ENCODE measurements at regions of chr20 and their contacts with region 1.

Region 1: DNA sequence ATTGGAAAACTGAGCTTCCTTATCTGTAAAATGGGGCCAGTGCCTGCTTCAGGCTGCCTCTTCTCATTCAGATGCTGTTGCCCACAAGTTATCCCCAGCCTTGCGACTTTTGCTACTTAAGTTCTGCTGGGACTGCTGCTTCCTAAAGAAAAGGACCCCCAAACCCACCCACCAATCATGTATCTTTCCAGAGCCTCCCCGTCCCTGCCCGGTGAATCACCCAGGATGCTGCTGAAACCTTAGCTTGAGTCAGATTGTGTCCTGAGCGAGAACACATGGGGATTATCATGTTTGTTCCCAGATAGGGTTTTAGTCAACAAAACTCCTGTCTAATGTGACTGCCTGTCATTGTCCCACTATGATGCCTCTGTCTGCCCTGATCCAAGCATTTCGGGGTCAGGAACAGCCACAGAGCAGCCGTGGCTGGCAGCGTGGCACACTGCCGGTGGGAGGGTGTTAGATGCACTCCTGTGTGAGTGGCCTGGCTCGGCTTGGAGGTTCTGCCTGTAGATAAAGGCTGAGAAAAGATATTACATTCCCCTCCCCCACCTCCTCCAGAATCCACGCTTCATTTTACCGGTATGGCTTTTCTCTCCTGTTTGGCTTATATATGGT is 79.9 kb downstream of the TOX2 start:
- DNase-seq: no peak
- H3K4me3 ChIP-seq: no peak overlapping the region
- H3K27ac ChIP-seq: no peak overlapping the region
- H3K4me1 ChIP-seq: no peaks in the 10 kb centered on the region
- H3K27me3 ChIP-seq: no peaks in the 10 kb centered on the region
- CTCF ChIP-seq: no peak

Region 2: DNA sequence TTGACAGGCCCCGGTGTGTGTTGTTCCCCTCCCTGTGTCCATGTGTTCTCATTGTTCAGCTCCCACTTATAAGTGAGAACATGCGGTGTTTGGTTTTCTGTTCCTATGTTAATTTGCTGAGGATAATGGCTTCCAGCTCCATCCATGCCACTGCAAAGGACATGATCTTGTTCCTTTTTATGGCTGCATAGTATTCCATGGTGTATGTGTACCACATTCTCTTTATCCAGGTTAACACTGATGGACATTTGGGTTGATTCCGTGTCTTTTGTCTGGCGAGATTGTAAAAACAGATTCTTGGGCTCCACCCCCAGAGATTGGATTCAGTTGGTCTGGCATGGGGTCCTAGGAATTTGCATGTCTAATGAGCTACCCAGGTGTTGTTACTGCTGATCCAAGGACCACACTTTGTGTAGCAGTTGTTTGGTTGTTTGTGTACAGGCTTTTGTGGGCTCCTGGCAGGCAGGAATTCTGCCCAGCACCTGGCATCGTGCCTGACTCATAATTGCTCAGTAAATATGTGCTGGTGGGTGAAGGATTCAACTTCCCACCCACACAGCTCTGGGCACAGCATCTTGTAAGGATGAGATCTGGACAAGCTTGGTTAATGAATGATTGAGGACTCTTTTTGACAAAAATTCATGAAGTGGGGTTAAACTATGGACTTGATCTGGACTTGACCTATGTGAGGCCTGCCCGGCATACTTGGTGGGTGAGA is 74.7 kb before region 1 on chr20:
- CTCF ChIA-PET with region 1: no interaction called
- dilution Hi-C with region 1: loop called (anchors 5 kb)
- in situ Hi-C with region 1: no loop called
- intact Hi-C with region 1: no loop called
- DNase-seq: no peak
- H3K4me3 ChIP-seq: no peak overlapping the region
- H3K27ac ChIP-seq: no peak overlapping the region
- H3K4me1 ChIP-seq: peaks cover 14% of the 10 kb centered on the region
- H3K27me3 ChIP-seq: peaks cover 15% of the 10 kb centered on the region
- CTCF ChIP-seq: no peak

Region 3: GRCh38 chr20:44028868-44029847 is 34.6 kb after region 1 on chr20:
- CTCF ChIA-PET with region 1: no interaction called
- dilution Hi-C with region 1: loop called (anchors 5 kb)
- in situ Hi-C with region 1: no loop called
- intact Hi-C with region 1: no loop called
- DNase-seq: no peak
- H3K4me3 ChIP-seq: no peak overlapping the region
- H3K27ac ChIP-seq: no peak overlapping the region
- H3K4me1 ChIP-seq: no peaks in the 10 kb centered on the region
- H3K27me3 ChIP-seq: peaks cover 3% of the 10 kb centered on the region
- CTCF ChIP-seq: no peak

Measured in mammary epithelial cell (primary cell).